Heart left ventricle (tissue), 16 donors: ENCODE measurements at regions of chr12 and their contacts with region 1.

Region 1: DNA sequence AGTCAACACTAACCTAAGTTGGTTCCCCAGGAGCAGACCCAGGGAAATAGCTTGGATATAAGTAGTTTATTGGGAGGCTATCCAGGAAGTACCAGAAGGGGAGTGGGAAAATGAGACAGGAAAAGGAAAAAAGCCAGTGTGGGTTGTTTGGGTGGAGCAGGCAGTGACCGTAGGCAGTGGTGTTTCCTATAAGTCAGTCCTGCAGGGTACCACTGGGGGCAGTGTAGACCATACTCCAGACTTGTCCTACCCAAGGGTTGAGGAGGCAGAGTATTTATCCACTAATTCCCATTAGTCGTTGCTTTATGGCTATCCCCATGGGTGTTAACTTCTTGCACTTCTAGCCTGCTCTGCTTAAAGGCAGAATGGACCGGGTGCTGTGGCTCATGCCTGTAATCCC is 6.4 kb upstream of the CCDC60 start:
- DNase-seq: peak in 4 of 5 donors; percentile 22 to 57 (median 42)
- ATAC-seq: peak; percentile 73 to 93 (median 84)
- H3K4me3 ChIP-seq: no peak overlapping the region
- H3K27ac ChIP-seq: peak overlapping the region in 2 of 12 donors; percentile 18 to 80
- H3K4me1 ChIP-seq: peaks cover 0 to 15% (median 5%) of the 10 kb centered on the region in 12 donors
- H3K27me3 ChIP-seq: peaks cover 0 to under 1% (median 0%) of the 10 kb centered on the region in 9 donors
- CTCF ChIP-seq: peak; percentile 31 to 65 (median 46)
- POLR2A ChIP-seq: no peak

Region 2: DNA sequence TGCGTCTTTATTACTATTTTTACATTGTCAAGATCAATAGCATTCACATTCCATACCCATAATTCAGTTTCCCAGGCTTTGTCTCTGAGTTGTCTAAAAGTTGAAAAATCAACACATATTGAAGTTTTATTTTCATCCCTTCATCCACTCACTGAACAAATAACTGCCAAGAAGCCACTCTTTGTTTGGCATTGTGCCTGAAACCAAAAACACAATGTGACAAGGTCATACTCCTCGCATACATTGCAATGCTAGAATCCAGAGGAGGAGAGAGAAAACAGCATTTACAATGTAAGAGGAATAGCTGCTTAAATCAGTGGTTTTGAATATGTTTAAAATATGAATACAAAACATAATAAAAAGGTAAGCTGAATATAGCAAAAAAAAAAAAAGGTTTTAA is 78.2 kb after region 1 on chr12:
- intact Hi-C with region 1: loop called in 6 of 10 experiments (anchors 2 to 10 kb)
- DNase-seq: no peak
- ATAC-seq: no peak
- H3K4me3 ChIP-seq: no peak overlapping the region
- H3K27ac ChIP-seq: peak overlapping the region in 1 of 12 donors; percentile 38
- H3K4me1 ChIP-seq: peaks cover 0 to 9% (median 0%) of the 10 kb centered on the region in 12 donors
- H3K27me3 ChIP-seq: no peaks in the 10 kb centered on the region
- CTCF ChIP-seq: no peak
- POLR2A ChIP-seq: no peak

Region 3: DNA sequence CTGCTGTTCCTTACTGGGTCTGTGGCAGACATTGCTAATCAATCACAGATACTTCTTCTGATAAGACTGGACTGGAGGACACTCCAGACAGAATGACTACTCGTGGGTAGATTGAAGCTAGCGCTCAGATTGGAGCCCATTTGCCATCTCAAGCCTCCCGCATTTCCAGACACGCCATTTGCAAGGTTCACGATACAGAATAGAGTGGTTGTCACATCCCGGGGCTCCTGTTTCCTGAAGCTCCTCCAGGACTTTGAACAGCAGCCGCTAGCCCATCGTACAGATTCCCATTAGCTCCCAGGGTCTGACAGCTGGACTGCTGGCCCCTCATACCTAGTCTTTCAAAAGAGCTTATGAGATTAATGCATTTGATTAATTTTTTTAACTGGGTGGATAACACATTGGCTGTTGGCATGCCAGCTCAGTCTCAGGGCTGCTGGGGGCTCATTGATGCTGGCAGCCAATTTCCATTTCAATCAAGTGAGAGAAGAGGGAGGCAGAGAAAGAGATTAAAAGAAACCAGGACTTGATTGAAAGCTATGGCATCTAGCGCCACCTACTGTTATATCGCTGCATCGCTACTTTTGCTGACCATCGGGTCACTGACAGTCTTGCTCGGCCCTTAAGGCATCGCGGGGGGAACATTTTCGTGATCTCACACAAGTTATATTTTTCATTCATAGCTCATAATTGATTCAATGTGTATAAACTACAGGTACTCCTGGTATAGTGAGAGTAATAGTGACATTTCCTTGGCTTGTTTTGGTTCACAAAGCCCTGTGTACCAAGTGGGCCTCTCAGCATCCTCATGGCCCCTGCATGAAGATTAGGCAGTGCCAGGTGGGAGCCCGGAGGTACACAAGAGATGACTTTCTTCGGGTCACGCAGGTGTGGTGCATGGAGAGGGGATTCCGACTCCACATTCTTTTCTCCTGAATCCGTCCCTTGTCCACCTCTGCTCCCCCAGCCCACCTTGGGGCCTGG is 85.0 kb after region 1 on chr12:
- intact Hi-C with region 1: loop called in 8 of 10 experiments (anchors 2 to 10 kb)
- DNase-seq: peak in 4 of 5 donors; percentile 53 to 67 (median 58)
- ATAC-seq: peak in 3 of 4 donors; percentile 42 to 73 (median 58)
- H3K4me3 ChIP-seq: no peak overlapping the region
- H3K27ac ChIP-seq: no peak overlapping the region
- H3K4me1 ChIP-seq: peaks cover 0 to 6% (median 0%) of the 10 kb centered on the region in 12 donors
- H3K27me3 ChIP-seq: no peaks in the 10 kb centered on the region
- CTCF ChIP-seq: peak; percentile 82 to 93 (median 90)
- POLR2A ChIP-seq: no peak